ENCODE measurements at regions of chr17 and their contacts with region 1.

Region 1: GRCh38 chr17:29369831-29370735 is 20.1 kb upstream of the TAOK1 start:
- DNase-seq: peak; percentile 67 to 75 (median 72)
- H3K4me3 ChIP-seq: peak overlapping the region in 1 of 2 donors; percentile 36
- H3K4me3 Mint-ChIP-seq: no peak overlapping the region
- H3K27ac ChIP-seq: peak overlapping the region; percentile 35
- H3K27ac Mint-ChIP-seq: no peak overlapping the region
- H3K4me1 ChIP-seq: peaks cover 8% of the 10 kb centered on the region
- H3K4me1 Mint-ChIP-seq: no peaks in the 10 kb centered on the region
- H3K27me3 ChIP-seq: no peaks in the 10 kb centered on the region
- H3K27me3 Mint-ChIP-seq: no peaks in the 10 kb centered on the region

Region 2: DNA sequence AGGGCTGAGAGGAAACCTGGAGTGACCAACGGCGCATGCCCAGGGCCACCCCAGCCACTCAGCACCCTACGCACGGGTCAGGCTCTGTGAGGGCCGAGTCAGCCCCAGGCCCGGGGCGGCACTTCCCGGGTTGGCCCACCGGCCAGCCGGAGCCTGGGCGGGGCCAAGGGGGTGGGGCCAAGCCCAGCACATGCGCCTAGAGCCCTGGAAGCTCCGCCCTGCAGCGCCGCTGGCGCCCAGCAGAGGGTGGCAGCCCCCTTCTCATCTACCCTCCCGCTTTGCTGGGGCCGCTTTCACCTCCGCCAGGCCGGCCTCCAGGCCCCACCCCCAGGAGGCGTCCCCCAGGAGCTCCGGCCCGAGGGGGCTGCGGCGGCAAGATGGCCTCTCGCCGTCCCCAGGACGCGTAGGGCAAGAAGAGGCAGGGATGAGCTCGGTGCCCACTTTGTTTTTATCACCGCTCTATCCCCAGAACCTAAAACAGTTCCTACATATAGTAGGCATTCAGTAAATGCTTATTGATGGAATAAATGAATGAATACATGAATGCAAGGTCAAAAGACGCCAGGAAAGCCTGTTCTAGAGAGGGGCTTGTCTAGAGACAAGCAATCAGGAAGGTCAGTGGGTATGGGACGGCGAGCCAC is 221.2 kb before region 1 on chr17:
- CTCF ChIA-PET with region 1: interaction called, 10 read pairs
- POLR2A ChIA-PET with region 1: no interaction called
- intact Hi-C with region 1: no loop called
- DNase-seq: peak; percentile 88 to 91 (median 89)
- H3K4me3 ChIP-seq: peak overlapping the region; percentile 41 to 42
- H3K4me3 Mint-ChIP-seq: peak overlapping the region; percentile 68 to 84 (median 75)
- H3K27ac ChIP-seq: peak overlapping the region; percentile 53
- H3K27ac Mint-ChIP-seq: peak overlapping the region; percentile 66 to 92 (median 90)
- H3K4me1 ChIP-seq: peaks cover 27% of the 10 kb centered on the region
- H3K4me1 Mint-ChIP-seq: peaks cover 23 to 62% (median 33%) of the 10 kb centered on the region in 4 donors
- H3K27me3 ChIP-seq: no peaks in the 10 kb centered on the region
- H3K27me3 Mint-ChIP-seq: no peaks in the 10 kb centered on the region

Region 3: DNA sequence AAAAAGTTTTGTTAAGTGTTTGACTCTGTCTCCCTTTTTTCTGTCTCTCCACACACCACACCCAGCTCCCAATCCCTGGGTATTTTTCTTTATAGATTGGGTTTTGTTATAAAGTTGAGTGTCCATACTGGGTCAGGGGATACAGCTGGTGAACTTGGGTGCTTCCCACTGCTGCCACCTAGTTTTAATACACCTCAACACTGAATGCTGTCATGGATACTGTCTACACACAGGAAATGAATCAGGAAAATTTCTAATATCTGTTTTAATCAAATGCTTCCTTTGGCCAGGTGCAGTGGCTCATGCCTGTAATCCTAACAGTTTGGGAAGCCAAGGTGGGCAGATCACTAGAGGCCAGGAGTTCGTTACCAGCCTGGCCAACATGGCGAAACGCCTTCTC is 14.8 kb after region 1 on chr17:
- CTCF ChIA-PET with region 1: interaction called, 55 read pairs
- POLR2A ChIA-PET with region 1: interaction called, 10 read pairs
- intact Hi-C with region 1: loop called (anchors 1 kb)
- DNase-seq: no peak
- H3K4me3 ChIP-seq: no peak overlapping the region
- H3K4me3 Mint-ChIP-seq: no peak overlapping the region
- H3K27ac ChIP-seq: no peak overlapping the region
- H3K27ac Mint-ChIP-seq: no peak overlapping the region
- H3K4me1 ChIP-seq: peaks cover 9% of the 10 kb centered on the region
- H3K4me1 Mint-ChIP-seq: peaks cover 3 to 6% (median 5%) of the 10 kb centered on the region in 4 donors
- H3K27me3 ChIP-seq: no peaks in the 10 kb centered on the region
- H3K27me3 Mint-ChIP-seq: no peaks in the 10 kb centered on the region

Region 4: DNA sequence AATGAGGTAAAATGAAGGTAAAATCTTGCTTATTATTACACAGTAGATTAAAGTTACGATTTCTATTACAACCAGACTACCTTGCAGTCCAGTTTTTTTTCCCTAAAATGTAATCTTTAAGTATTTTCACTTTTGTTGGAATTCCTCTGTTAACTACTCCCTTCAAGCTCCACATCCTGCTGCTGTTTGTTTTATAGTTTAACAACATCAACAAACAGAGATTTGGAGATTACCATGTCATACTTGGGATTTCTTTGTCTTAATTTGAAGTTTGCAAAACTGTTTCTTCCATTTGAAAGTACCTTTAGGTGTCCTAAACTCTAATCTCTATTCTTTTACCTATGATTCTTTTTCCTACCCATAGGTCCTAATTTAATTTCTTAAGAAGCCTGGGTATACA is 113.4 kb after region 1 on chr17:
- CTCF ChIA-PET with region 1: interaction called, 14 read pairs
- POLR2A ChIA-PET with region 1: interaction called, 3 read pairs
- intact Hi-C with region 1: no loop called
- DNase-seq: no peak
- H3K4me3 ChIP-seq: no peak overlapping the region
- H3K4me3 Mint-ChIP-seq: no peak overlapping the region
- H3K27ac ChIP-seq: no peak overlapping the region
- H3K27ac Mint-ChIP-seq: no peak overlapping the region
- H3K4me1 ChIP-seq: no peaks in the 10 kb centered on the region
- H3K4me1 Mint-ChIP-seq: no peaks in the 10 kb centered on the region
- H3K27me3 ChIP-seq: no peaks in the 10 kb centered on the region
- H3K27me3 Mint-ChIP-seq: no peaks in the 10 kb centered on the region

Region 5: GRCh38 chr17:29568331-29569244 is 198.5 kb after region 1 on chr17 and contains the start of gene TP53I13:
- CTCF ChIA-PET with region 1: interaction called, 23 read pairs
- POLR2A ChIA-PET with region 1: interaction called, 13 read pairs
- intact Hi-C with region 1: loop called (anchors 10 kb)
- DNase-seq: peak; percentile 78 to 86 (median 83)
- H3K4me3 ChIP-seq: peak within 1 kb of the TSS; percentile 58 to 83
- H3K4me3 Mint-ChIP-seq: peak within 1 kb of the TSS; percentile 92 to 98 (median 96)
- H3K27ac ChIP-seq: peak within 1 kb of the TSS; percentile 61
- H3K27ac Mint-ChIP-seq: peak within 1 kb of the TSS; percentile 92 to 98 (median 95)
- H3K4me1 ChIP-seq: peaks cover 31% of the 10 kb centered on the region
- H3K4me1 Mint-ChIP-seq: peaks cover 23 to 55% (median 34%) of the 10 kb centered on the region in 4 donors
- H3K27me3 ChIP-seq: no peaks in the 10 kb centered on the region
- H3K27me3 Mint-ChIP-seq: no peaks in the 10 kb centered on the region
- total RNA-seq, gene TP53I13: 149 to 158 TPM

Region 6: DNA sequence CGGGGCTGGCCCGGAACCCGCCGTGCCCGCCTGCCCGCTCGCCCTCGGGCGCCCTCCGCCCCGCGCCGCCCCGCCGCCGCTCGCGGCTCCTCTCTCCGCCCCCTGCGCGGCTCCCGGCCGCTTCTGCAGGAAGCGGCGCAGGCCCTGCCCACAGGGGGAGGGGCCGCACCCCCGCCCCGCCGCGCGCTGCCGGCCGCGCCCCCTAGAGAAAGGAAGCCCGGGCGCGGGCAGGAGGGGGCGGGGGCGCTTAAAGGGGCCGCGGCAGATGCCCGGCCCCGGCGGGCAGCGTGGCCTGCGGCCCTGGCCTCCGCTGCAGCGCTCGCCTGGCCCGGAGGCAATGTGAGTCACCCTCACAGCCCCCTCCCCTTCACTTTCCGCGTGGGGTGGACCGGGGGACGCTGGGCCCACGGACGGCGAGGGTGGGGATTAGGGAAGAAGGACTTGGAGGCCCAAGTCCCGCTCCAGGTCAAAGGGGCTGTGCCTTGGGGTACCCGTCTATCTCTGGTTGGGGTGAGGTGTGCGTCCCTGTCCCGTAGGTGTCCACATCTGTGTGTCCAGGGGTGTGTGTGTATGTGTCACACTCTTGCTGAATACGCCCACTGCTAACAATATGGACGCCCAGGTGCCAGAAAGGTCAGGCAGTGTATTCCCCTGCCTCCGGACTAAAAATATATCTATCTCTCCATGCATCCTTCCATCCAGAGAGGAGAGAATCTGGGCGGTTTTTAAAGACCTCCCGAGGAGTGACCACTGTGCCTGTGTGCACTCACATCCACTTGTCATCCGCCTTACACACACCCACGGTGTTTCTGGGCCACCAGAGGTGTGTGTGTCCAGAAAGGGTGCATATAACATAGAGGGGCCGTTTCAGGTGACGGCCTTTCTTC is 219.7 kb after region 1 on chr17 and contains the start of gene GIT1:
- CTCF ChIA-PET with region 1: interaction called, 13 read pairs
- POLR2A ChIA-PET with region 1: interaction called, 10 read pairs
- intact Hi-C with region 1: loop called (anchors 1 kb)
- DNase-seq: peak; percentile 81 to 86 (median 85)
- H3K4me3 ChIP-seq: peak within 1 kb of the TSS; percentile 61 to 82
- H3K4me3 Mint-ChIP-seq: peak within 1 kb of the TSS; percentile 93 to 97 (median 95)
- H3K27ac ChIP-seq: peak within 1 kb of the TSS; percentile 70
- H3K27ac Mint-ChIP-seq: peak within 1 kb of the TSS; percentile 86 to 97 (median 92)
- H3K4me1 ChIP-seq: peaks cover 82% of the 10 kb centered on the region
- H3K4me1 Mint-ChIP-seq: peaks cover 30 to 71% (median 53%) of the 10 kb centered on the region in 4 donors
- H3K27me3 ChIP-seq: no peaks in the 10 kb centered on the region
- H3K27me3 Mint-ChIP-seq: no peaks in the 10 kb centered on the region
- total RNA-seq, gene GIT1: 78.9 to 82.8 TPM

Region 7: DNA sequence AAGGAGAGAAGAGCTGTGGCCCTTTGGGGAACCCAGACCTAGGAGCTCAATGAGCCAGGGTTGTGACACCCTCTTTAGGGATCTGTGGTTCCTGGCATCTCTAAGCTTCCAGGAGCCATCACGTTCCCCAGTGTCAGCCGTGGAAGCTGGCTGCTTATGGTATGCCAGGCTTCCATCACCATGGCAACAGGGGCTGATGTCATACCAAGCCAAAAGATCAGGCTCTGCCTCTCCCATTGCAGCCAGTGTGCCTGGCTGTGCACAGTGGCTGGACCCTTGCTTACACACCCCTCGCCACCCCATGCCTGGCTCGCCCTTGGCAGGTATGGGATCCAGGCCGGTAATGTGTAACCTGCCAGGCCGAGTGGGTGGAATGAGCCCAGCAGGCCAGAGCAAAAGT is 468.9 kb after region 1 on chr17:
- CTCF ChIA-PET with region 1: no interaction called
- POLR2A ChIA-PET with region 1: no interaction called
- intact Hi-C with region 1: no loop called
- DNase-seq: no peak
- H3K4me3 ChIP-seq: no peak overlapping the region
- H3K4me3 Mint-ChIP-seq: no peak overlapping the region
- H3K27ac ChIP-seq: no peak overlapping the region
- H3K27ac Mint-ChIP-seq: no peak overlapping the region
- H3K4me1 ChIP-seq: no peaks in the 10 kb centered on the region
- H3K4me1 Mint-ChIP-seq: no peaks in the 10 kb centered on the region
- H3K27me3 ChIP-seq: no peaks in the 10 kb centered on the region
- H3K27me3 Mint-ChIP-seq: no peaks in the 10 kb centered on the region

Measured in CD4-positive, alpha-beta memory T cell (primary cell).